ENCODE measurements at regions of chr2 and their contacts with region 1.

Region 1: DNA sequence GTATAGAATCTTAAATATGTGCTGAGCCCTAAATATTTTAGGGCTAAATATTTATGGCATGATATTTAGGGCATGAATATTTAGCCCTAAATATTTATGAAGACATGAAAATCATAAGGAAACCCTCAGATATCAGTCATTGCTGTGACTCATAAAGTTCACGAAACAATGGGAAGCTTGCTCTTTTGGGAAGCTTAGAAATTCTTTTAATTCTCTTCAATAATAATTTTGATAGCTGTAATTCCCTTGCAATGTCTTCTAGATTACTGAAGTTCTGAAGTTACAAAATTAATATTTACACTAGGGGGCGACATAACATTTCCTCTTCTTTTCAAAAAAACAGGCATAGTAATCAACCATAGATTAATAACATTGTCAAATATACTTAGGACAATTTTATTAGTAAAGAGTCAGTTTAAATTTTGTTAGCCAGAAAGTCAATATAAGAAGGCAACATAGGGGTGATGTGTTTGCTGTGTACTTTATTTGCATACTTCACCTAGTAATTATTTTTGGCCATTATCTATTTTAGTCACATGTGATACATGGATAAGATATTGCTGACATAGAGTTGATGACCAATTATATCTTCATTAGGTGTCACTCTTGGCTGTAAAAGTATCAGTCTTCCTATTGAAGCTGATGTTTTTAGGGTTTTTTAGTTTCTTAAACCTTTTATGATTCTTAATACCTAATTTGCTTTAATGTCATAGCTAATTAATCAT is 13.2 kb downstream of the ZNF804A start:
- DNase-seq: peak; percentile 41
- H3K4me3 ChIP-seq: no peak overlapping the region
- H3K27ac ChIP-seq: no peak overlapping the region
- H3K4me1 ChIP-seq: no peaks in the 10 kb centered on the region
- H3K27me3 ChIP-seq: no peaks in the 10 kb centered on the region
- CTCF ChIP-seq: peak in 1 of 2 donors; percentile 9
- POLR2A ChIP-seq: no peak

Region 2: GRCh38 chr2:184472481-184472880 is 139.0 kb before region 1 on chr2:
- CTCF ChIA-PET with region 1: no interaction called
- POLR2A ChIA-PET with region 1: no interaction called
- dilution Hi-C with region 1: no loop called
- intact Hi-C with region 1: no loop called
- DNase-seq: no peak
- H3K4me3 ChIP-seq: no peak overlapping the region
- H3K27ac ChIP-seq: no peak overlapping the region
- H3K4me1 ChIP-seq: no peaks in the 10 kb centered on the region
- H3K27me3 ChIP-seq: no peaks in the 10 kb centered on the region
- CTCF ChIP-seq: no peak
- POLR2A ChIP-seq: no peak

Region 3: DNA sequence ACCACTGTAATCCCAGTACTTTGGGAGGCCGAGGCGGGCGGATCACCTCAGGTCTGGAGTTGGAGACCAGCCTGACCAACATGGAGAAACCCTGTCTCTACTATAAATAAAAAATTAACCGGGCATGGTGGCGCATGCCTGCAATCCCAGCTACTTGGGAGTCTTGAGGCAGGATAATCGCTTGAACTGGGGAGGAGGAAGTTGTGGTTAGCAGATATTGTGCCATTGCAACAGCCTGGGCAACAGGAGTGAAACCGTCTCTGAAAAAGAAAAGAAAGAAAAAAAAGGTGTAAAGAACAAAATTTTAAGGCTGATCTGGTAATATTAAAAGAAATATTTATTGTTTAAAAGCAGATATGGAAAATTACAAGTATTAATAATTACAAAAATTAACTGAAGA is 16.5 kb after region 1 on chr2:
- CTCF ChIA-PET with region 1: interaction called, 13 read pairs
- POLR2A ChIA-PET with region 1: no interaction called
- dilution Hi-C with region 1: no loop called
- intact Hi-C with region 1: no loop called
- DNase-seq: no peak
- H3K4me3 ChIP-seq: no peak overlapping the region
- H3K27ac ChIP-seq: no peak overlapping the region
- H3K4me1 ChIP-seq: no peaks in the 10 kb centered on the region
- H3K27me3 ChIP-seq: no peaks in the 10 kb centered on the region
- CTCF ChIP-seq: no peak
- POLR2A ChIP-seq: no peak

Region 4: DNA sequence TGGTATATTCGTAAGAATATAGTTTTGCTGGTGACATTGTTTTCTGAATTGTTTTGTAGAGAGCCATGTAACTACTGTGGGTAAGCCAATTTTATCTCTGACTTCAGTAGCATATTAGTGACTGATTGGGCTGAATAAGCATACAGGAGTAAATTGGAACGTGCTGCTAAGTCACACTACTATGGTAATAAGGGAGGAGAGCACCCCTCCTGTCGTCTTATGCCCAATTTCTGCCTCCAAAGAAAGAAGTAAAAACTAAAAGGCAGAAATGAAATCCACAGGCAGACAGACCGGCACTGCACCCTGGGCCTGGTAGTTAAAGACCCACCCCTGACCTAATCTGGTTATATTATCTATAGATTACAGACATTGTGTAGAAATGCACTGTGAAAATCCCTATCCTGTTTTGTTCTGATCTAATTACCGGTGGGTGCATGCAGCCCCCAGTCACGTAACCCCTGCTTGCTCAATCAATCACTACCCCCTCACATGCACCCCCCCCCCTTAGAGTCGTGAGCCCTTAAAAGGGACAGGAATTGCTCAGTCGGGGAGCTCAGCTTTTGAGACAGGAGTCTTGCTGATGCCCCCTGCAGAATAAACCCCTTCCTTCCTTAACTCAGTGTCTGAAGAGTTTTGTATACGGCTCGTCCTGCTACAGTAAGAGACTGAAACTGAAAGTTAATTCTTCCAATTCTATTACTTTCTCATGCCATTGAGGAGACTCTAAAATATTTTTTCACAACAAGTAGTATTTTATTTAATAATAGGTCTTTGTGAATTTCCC is 153.8 kb after region 1 on chr2:
- CTCF ChIA-PET with region 1: no interaction called
- POLR2A ChIA-PET with region 1: no interaction called
- dilution Hi-C with region 1: no loop called
- intact Hi-C with region 1: loop called (anchors 5 kb)
- DNase-seq: no peak
- H3K4me3 ChIP-seq: no peak overlapping the region
- H3K27ac ChIP-seq: no peak overlapping the region
- H3K4me1 ChIP-seq: peaks cover 34% of the 10 kb centered on the region
- H3K27me3 ChIP-seq: no peaks in the 10 kb centered on the region
- CTCF ChIP-seq: no peak
- POLR2A ChIP-seq: no peak

Region 5: GRCh38 chr2:185738679-185739472 is 1127.4 kb after region 1 on chr2 and contains the start of gene FSIP2:
- CTCF ChIA-PET with region 1: interaction called, 19 read pairs
- POLR2A ChIA-PET with region 1: no interaction called
- dilution Hi-C with region 1: no loop called
- intact Hi-C with region 1: loop called (anchors 2 kb)
- DNase-seq: peak; percentile 84
- H3K4me3 ChIP-seq: peak within 1 kb of the TSS; percentile 28 to 50 (median 42)
- H3K27ac ChIP-seq: no peak within 1 kb of the TSS
- H3K4me1 ChIP-seq: peaks cover 2% of the 10 kb centered on the region
- H3K27me3 ChIP-seq: peaks cover 0 to 2% of the 10 kb centered on the region in 2 experiments
- CTCF ChIP-seq: peak; percentile 99 to 100
- POLR2A ChIP-seq: no peak
- total RNA-seq, gene FSIP2: 0.16 and 0.24 TPM in 2 replicates

Measured in endothelial cell of umbilical vein (primary cell).